ENCODE measurements at regions of chr10 and their contacts with region 1.

Region 1: DNA sequence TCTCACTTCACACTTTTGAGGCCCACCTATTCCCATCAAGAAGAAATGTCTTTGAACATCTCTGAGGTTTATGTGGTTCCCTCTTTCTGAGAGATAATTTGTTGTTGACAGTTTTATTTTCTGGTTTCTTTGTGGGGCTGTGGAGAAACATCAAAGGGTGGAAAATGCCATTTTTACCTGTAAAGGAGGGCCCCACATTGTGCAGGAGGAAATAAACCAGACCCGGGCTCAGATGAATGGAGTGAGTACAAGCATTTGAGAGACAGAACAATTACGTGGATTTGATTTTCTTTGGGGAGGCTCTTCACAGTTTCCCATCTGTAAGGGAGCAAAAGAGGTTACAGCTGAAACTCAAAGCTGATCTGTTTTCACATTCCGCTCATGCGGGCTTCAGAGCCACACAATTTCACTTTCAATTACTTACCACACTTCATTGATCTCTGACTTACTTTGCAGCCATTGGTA is 29.8 kb downstream of the ITPRIP start:
- DNase-seq: no peak
- H3K4me3 Mint-ChIP-seq: no peak overlapping the region
- H3K27ac Mint-ChIP-seq: peak overlapping the region; percentile 71
- H3K4me1 Mint-ChIP-seq: peaks cover 47% of the 10 kb centered on the region
- H3K27me3 Mint-ChIP-seq: no peaks in the 10 kb centered on the region

Region 2: DNA sequence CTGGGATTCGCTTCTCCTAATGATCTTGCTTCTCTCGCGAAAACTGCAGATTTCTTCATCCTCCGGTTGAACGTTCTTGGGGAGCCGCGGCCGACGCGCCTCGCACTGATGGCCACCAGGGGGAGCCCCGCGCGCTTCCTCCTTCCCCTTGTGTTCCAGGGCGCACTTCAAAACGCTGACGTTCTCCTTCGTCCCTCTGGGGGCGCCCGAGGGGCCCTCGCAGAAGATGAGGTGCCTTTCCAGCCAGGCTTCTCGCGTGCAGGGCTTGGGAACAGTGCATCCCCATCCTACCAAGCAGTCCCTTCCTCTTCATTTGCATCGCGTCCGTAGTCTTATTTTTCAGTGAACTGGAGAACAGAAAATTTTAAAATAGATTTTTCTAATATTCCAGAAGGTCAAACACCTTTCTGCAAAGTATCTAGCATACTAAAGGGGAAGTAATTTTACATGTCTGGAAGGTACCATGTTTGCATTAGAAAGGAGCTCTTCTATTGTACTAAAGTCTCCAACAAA is 17.0 kb before region 1 on chr10:
- CTCF ChIA-PET with region 1: interaction called, 118 read pairs
- POLR2A ChIA-PET with region 1: interaction called, 11 read pairs
- DNase-seq: peak; percentile 90
- H3K4me3 Mint-ChIP-seq: no peak overlapping the region
- H3K27ac Mint-ChIP-seq: no peak overlapping the region
- H3K4me1 Mint-ChIP-seq: peaks cover 12% of the 10 kb centered on the region
- H3K27me3 Mint-ChIP-seq: peaks cover 33% of the 10 kb centered on the region